PC-3 (cell line): ENCODE measurements at regions of chr4 and their contacts with region 1.

Region 1: GRCh38 chr4:77044461-77045150 is 31.2 kb downstream of the CCNI start:
- DNase-seq: peak; percentile 74
- ATAC-seq: peak; percentile 53
- H3K4me3 ChIP-seq: no peak overlapping the region
- H3K27ac ChIP-seq: no peak overlapping the region
- H3K4me1 ChIP-seq: peaks cover 13% of the 10 kb centered on the region
- H3K27me3 ChIP-seq: no peaks in the 10 kb centered on the region
- CTCF ChIP-seq: peak; percentile 71

Region 2: GRCh38 chr4:75686346-75686745 is 1358.3 kb before region 1 on chr4:
- CTCF ChIA-PET with region 1: no interaction called
- POLR2A ChIA-PET with region 1: interaction called, 12 read pairs
- intact Hi-C with region 1: no loop called
- DNase-seq: no peak
- ATAC-seq: no peak
- H3K4me3 ChIP-seq: no peak overlapping the region
- H3K27ac ChIP-seq: no peak overlapping the region
- H3K4me1 ChIP-seq: no peaks in the 10 kb centered on the region
- H3K27me3 ChIP-seq: no peaks in the 10 kb centered on the region
- CTCF ChIP-seq: no peak

Region 3: DNA sequence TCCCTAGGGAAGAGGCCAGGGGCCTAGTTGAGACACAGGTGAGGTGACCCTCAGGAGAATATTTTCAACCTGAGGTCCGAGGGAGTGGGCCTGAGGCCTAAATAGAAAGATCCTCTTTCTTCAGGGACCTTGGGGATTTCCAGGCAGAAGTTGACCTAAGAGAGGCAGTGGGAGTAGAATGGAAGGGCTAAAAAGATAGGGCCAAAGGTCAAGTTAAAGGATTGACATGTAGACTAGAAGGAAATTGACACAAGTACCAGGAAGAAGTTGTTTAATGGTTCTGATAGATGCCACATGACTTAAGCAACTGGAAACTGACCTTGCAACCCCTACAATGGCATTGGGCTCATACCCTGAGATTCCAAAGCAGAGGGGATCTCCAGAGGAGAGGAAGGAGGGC is 532.7 kb before region 1 on chr4:
- CTCF ChIA-PET with region 1: no interaction called
- POLR2A ChIA-PET with region 1: no interaction called
- intact Hi-C with region 1: loop called (anchors 1 kb)
- DNase-seq: no peak
- ATAC-seq: no peak
- H3K4me3 ChIP-seq: no peak overlapping the region
- H3K27ac ChIP-seq: no peak overlapping the region
- H3K4me1 ChIP-seq: peaks cover 5% of the 10 kb centered on the region; the same call in 1 of the 2 replicates
- H3K27me3 ChIP-seq: no peaks in the 10 kb centered on the region
- CTCF ChIP-seq: no peak

Region 4: GRCh38 chr4:77203380-77204197 is 159.0 kb after region 1 on chr4:
- CTCF ChIA-PET with region 1: interaction called, 6 read pairs
- POLR2A ChIA-PET with region 1: no interaction called
- intact Hi-C with region 1: loop called (anchors 2 kb)
- DNase-seq: peak; percentile 79
- ATAC-seq: peak; percentile 42
- H3K4me3 ChIP-seq: no peak overlapping the region
- H3K27ac ChIP-seq: peak overlapping the region; percentile 98
- H3K4me1 ChIP-seq: peaks cover 32% of the 10 kb centered on the region
- H3K27me3 ChIP-seq: no peaks in the 10 kb centered on the region
- CTCF ChIP-seq: peak; percentile 80

Region 5: DNA sequence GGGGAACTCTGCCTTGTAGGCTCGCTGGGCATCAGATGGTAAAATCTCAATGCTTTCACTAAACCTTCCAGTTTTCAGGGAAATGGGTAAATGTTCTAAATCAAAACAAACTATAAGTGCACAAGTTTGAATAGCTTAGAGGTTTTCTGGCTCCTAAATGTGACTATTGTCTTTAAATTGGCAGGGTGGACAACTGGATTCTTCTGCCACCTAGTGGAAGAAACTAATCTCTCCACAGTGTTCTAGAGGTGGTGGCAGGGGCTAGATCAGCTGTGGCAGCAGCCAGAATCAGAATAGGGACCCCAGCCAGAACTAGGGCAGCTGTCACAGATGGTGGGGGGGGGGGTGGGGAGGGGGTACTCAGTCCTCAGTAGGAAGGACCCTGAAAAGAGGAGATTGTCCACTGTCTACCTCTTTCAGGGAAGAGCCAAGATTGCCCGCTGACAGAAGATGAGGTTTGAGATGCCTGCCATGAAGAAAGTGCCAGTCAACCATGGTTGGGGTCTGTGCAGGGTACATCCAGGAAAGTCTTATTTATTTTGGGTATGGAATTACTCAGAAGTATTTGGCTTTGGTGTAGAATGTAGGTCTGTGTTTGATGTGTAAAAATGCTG is 313.8 kb after region 1 on chr4:
- CTCF ChIA-PET with region 1: no interaction called
- POLR2A ChIA-PET with region 1: interaction called, 23 read pairs
- intact Hi-C with region 1: no loop called
- DNase-seq: peak; percentile 55
- ATAC-seq: peak; percentile 67
- H3K4me3 ChIP-seq: no peak overlapping the region
- H3K27ac ChIP-seq: no peak overlapping the region
- H3K4me1 ChIP-seq: no peaks in the 10 kb centered on the region
- H3K27me3 ChIP-seq: 0 out of 2 replicates have a peak, but pooled peaks cover 14% of the 10 kb centered on the region
- CTCF ChIP-seq: peak; percentile 63